AG04450 (cell line): ENCODE measurements at regions of chr11 and their contacts with region 1.

Region 1: DNA sequence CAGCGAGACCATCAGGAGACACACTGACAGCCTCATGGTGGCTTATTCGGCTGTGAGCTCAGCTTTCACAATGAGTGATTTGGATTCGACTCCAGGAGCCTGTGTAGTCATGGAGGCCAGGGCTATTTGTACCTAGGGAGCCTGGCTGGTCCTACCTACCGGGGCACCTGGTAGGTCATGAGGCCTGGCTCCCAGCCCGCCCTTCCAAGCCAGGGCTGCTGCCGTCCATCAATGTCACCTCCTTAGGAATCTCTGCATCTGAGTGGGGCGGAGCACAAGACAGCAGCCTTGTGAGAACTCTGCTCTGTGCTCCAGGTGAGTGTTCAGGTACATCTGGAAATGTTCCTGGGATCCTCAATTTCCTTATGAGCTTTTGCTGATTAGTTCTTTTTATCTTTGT is at the start of gene SCGB1D4:
- DNase-seq: no peak
- H3K4me3 ChIP-seq: no peak within 1 kb of the TSS
- H3K27ac ChIP-seq: no peak within 1 kb of the TSS
- H3K27me3 ChIP-seq: peaks cover 19% of the 10 kb centered on the region
- CTCF ChIP-seq: no peak
- polyA plus RNA-seq, gene SCGB1D4: not detected in 2 replicates

Region 2: GRCh38 chr11:62233730-62234129 is 65.2 kb before region 1 on chr11:
- CTCF ChIA-PET with region 1: no interaction called
- POLR2A ChIA-PET with region 1: no interaction called
- DNase-seq: no peak
- H3K4me3 ChIP-seq: no peak overlapping the region
- H3K27ac ChIP-seq: no peak overlapping the region
- H3K27me3 ChIP-seq: peaks cover 4% of the 10 kb centered on the region
- CTCF ChIP-seq: peak; percentile 18; the same call in 1 of the 2 replicates

Region 3: GRCh38 chr11:62315431-62315830 is 16.5 kb after region 1 on chr11:
- CTCF ChIA-PET with region 1: interaction called, 10 read pairs
- POLR2A ChIA-PET with region 1: no interaction called
- DNase-seq: no peak
- H3K4me3 ChIP-seq: no peak overlapping the region
- H3K27ac ChIP-seq: no peak overlapping the region
- H3K27me3 ChIP-seq: peaks cover 20% of the 10 kb centered on the region
- CTCF ChIP-seq: no peak